ENCODE measurements at regions of chr17 and their contacts with region 1.

Region 1: DNA sequence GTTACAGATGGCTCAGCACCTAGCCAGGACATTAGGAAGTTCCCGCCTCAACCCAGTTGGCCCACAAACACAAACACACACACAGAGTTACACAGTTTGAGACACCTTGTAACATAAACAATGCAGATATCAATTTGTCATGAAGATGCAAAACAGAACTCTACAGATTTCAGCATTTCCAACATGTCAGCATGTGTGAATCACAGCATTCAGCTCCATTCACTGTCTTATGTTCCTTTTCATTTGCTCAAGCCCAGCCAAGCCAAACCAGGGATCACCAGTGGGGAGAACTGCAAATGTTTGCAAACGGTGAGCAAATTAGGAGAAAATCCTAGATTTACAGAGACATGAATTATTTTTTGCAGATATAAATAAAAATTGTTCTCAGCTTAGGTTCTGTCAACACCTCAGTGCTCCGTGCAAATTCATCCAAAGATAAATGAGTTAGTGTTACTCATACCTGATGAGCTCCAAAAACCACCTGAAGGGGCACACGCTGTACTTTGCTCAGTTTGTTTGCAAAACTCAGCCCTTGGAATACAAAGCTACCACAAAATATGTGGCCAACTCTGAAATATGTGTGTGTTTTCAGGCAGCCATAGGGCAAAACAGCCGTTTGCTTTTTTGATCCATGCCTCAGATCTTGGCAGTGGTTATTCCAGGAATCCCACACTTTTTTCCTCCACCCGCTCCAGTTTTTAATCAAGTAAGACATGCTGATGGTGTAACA is 16.3 kb upstream of the COX10 start:
- DNase-seq: no peak
- H3K4me3 Mint-ChIP-seq: no peak overlapping the region
- H3K27ac Mint-ChIP-seq: no peak overlapping the region
- H3K4me1 Mint-ChIP-seq: no peaks in the 10 kb centered on the region
- H3K27me3 Mint-ChIP-seq: no peaks in the 10 kb centered on the region
- CTCF ChIP-seq: no peak

Region 2: DNA sequence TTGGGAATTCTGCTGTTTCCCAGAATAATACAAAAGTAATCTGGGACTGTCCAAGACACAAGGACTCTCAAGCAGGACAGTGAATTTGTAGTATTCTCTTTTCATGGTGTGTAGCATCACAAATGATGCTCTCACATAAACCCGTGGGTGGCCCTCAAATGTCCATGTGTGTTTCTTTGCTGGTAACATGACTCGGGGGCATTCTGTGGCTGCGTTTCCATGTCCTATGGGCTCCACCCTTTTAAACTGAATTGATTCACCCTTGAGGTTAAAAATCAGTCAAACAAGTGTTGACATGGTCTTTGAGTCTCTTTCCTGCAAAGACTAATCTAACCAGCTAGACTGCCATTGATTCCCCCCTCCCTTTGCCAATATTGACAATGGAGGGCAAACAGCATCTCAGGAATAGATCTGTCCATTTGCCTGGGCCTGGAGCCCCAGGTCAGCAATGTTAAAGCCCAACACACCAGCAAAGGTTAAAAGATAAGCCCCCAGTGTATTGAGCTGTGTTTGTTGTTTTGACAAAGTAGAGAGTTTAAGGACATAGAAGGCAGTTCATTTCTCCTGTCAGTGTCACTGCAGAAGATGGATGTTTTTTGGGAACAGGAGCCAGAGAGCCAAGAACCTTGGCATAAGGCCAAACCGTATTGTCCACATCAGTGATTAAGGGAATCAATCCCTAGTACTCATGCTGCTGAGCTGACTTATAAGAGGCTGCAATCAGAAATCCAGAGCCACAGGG is 100.9 kb before region 1 on chr17:
- CTCF ChIA-PET with region 1: no interaction called
- intact Hi-C with region 1: no loop called
- DNase-seq: no peak
- H3K4me3 Mint-ChIP-seq: no peak overlapping the region
- H3K27ac Mint-ChIP-seq: no peak overlapping the region
- H3K4me1 Mint-ChIP-seq: no peaks in the 10 kb centered on the region
- H3K27me3 Mint-ChIP-seq: no peaks in the 10 kb centered on the region
- CTCF ChIP-seq: no peak

Region 3: GRCh38 chr17:13995856-13996271 is 57.2 kb before region 1 on chr17:
- CTCF ChIA-PET with region 1: interaction called, 10 read pairs
- intact Hi-C with region 1: no loop called
- DNase-seq: no peak
- H3K4me3 Mint-ChIP-seq: no peak overlapping the region
- H3K27ac Mint-ChIP-seq: no peak overlapping the region
- H3K4me1 Mint-ChIP-seq: no peaks in the 10 kb centered on the region
- H3K27me3 Mint-ChIP-seq: no peaks in the 10 kb centered on the region
- CTCF ChIP-seq: no peak

Region 4: DNA sequence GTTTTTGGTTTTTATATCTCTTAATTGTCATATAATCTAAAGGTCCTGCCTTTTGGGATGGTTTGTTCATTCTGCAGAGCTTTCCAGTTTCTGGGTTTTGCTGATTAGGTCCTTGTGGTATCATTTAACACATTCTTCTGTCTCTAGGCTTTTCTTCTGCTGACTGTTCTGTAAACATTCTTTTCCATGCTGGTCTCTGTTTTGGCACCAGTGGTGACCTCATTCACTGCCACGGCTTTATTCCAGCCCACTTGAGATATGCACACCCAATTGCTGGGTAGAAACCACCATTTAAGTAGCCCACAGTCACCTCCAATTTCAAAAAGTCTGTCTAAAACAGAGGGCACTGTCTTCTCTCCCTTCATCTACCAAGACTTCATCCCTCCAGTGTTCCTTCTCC is 14.8 kb before region 1 on chr17:
- CTCF ChIA-PET with region 1: no interaction called
- intact Hi-C with region 1: no loop called
- DNase-seq: no peak
- H3K4me3 Mint-ChIP-seq: no peak overlapping the region
- H3K27ac Mint-ChIP-seq: no peak overlapping the region
- H3K4me1 Mint-ChIP-seq: no peaks in the 10 kb centered on the region
- H3K27me3 Mint-ChIP-seq: no peaks in the 10 kb centered on the region
- CTCF ChIP-seq: no peak

Region 5: DNA sequence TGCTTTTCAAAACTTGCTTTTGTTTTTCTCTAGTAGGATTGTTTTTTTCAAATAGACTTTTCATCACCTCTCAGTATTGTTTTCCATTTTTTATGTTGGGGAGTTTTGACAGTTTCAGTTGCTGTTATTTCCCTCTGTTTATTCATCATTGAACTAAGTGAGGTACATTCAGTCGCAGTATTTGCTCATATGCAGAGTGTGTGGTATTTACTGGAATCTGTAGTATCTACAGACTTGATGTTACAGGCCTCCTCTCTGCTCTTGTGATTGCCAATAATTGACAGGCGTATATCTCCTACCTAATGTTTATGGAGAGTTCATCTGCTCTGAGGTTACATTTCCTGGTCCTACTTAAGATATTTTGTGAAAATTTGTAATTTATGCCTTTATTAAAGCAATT is 65.9 kb after region 1 on chr17:
- CTCF ChIA-PET with region 1: no interaction called
- intact Hi-C with region 1: no loop called
- DNase-seq: no peak
- H3K4me3 Mint-ChIP-seq: no peak overlapping the region
- H3K27ac Mint-ChIP-seq: no peak overlapping the region
- H3K4me1 Mint-ChIP-seq: no peaks in the 10 kb centered on the region
- H3K27me3 Mint-ChIP-seq: no peaks in the 10 kb centered on the region
- CTCF ChIP-seq: no peak